ENCODE measurements at regions of chr11 and their contacts with region 1.

Region 1: GRCh38 chr11:13939952-13940610 is 22.4 kb upstream of the SPON1 start:
- DNase-seq: no peak
- ATAC-seq: no peak
- H3K4me3 Mint-ChIP-seq: no peak overlapping the region
- H3K27ac Mint-ChIP-seq: peak overlapping the region; percentile 68
- H3K4me1 Mint-ChIP-seq: peaks cover 36% of the 10 kb centered on the region
- H3K27me3 Mint-ChIP-seq: peaks cover 4% of the 10 kb centered on the region

Region 2: DNA sequence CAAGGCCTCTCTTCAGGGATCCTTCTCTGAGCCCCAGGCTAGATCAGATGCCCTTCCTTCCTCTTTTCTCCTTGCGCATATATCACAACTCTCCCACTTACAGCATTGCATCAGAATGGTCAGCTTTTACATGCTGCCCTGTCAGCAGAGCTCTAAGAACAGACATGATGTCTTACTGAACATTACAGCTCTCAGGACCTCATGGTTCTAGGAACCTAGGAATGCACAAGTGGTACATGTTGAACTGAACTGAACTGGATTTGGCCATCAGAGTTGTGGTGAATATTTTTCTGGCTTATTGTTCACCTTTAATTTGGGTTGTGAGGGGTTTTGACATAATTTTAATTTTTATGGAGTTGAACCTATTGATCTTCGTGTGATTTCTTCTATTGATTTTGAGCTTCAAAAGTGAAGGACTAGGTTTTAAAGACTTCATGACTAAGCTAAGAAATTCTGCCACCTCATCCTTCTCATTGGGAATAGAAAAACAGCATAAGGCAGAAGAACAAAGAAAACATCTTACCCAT is 15.2 kb before region 1 on chr11:
- CTCF ChIA-PET with region 1: interaction called, 18 read pairs
- DNase-seq: no peak
- ATAC-seq: no peak
- H3K4me3 Mint-ChIP-seq: no peak overlapping the region
- H3K27ac Mint-ChIP-seq: peak overlapping the region; percentile 95
- H3K4me1 Mint-ChIP-seq: peaks cover 41% of the 10 kb centered on the region
- H3K27me3 Mint-ChIP-seq: no peaks in the 10 kb centered on the region